ENCODE measurements at regions of chr19 and their contacts with region 1.

Region 1: GRCh38 chr19:42450314-42450934 is 7.7 kb upstream of the CXCL17 start:
- DNase-seq: peak; percentile 89

Region 2: GRCh38 chr19:42121656-42122069 is 328.8 kb before region 1 on chr19:
- intact Hi-C with region 1: no loop called
- DNase-seq: no peak

Region 3: DNA sequence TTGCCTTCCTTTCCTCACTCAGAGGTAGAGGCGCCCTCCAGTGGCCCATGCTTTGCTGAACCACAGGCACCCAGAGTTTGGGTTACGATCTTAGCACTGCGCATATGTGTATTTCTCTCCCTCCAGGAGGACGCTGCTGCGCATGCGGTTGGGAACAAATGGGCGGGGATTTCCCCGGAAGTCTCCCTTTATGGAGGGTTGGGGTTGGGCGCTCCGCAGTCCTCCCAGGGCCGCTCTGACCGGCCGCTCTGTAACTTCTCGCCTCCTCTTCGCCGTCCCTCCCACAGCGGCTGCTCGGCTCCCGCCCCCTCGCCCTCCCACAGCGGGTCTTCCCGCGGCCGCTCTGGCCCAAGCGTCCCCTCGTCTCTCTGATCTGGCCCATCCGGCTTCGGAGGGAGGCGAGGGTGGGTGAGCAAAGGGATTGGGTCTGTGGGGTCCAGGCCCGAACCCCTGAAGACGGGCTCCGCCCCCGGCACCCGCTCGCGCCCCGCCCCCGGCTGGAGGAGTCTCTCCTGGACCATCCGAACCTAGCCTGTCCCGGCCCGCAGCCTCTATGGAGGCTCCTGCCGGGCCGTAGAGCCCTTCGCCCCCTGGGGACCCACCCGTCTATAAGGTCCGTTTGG is 125.0 kb before region 1 on chr19 and contains the start of gene MEGF8:
- intact Hi-C with region 1: no loop called
- DNase-seq: peak; percentile 99
- total RNA-seq, gene MEGF8: 45.8 TPM

Region 4: GRCh38 chr19:42529248-42529764 is 78.9 kb after region 1 on chr19:
- intact Hi-C with region 1: loop called (anchors 2 kb)
- DNase-seq: peak; percentile 82